PC-3 (cell line): ENCODE measurements at regions of chr12 and their contacts with region 1.

Region 1: DNA sequence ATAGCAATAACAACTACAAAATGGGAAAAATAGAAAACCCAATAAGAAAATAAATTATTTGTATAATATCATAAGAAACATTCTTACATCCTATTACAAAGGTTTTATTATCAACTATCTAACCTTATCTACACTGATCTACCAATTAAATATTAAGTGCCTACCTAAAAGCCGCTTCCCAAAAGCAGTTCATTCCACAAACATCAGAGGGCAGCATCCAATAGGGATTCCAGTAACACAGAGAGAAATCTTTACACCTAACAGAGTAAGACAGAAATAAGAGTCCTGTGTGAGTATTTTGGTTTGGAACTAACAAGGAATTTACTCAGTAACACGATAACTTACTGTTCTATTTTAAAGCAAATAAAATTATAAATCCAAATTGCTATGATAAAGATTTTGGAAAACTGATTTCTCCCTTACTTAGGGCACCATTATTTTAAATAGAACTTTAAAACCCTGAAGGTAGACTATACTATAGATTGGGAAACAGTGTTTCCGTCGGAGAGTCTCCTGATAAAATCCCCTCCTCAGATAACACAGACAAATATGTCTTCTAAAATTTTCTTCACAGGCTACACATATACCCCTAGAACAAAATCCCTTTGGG is 15.0 kb downstream of the GXYLT1 start:
- DNase-seq: peak; percentile 80
- ATAC-seq: peak; percentile 62
- H3K4me3 ChIP-seq: no peak overlapping the region
- H3K27ac ChIP-seq: no peak overlapping the region
- H3K4me1 ChIP-seq: peaks cover 20% of the 10 kb centered on the region
- H3K27me3 ChIP-seq: no peaks in the 10 kb centered on the region
- CTCF ChIP-seq: peak; percentile 94

Region 2: GRCh38 chr12:42145197-42145549 is 15.5 kb after region 1 on chr12:
- CTCF ChIA-PET with region 1: no interaction called
- POLR2A ChIA-PET with region 1: no interaction called
- intact Hi-C with region 1: no loop called
- DNase-seq: peak; percentile 2
- ATAC-seq: peak; percentile 1
- H3K4me3 ChIP-seq: peak overlapping the region; percentile 86
- H3K27ac ChIP-seq: no peak overlapping the region
- H3K4me1 ChIP-seq: peaks cover 23% of the 10 kb centered on the region; the same call in 1 of the 2 replicates
- H3K27me3 ChIP-seq: no peaks in the 10 kb centered on the region
- CTCF ChIP-seq: no peak

Region 3: DNA sequence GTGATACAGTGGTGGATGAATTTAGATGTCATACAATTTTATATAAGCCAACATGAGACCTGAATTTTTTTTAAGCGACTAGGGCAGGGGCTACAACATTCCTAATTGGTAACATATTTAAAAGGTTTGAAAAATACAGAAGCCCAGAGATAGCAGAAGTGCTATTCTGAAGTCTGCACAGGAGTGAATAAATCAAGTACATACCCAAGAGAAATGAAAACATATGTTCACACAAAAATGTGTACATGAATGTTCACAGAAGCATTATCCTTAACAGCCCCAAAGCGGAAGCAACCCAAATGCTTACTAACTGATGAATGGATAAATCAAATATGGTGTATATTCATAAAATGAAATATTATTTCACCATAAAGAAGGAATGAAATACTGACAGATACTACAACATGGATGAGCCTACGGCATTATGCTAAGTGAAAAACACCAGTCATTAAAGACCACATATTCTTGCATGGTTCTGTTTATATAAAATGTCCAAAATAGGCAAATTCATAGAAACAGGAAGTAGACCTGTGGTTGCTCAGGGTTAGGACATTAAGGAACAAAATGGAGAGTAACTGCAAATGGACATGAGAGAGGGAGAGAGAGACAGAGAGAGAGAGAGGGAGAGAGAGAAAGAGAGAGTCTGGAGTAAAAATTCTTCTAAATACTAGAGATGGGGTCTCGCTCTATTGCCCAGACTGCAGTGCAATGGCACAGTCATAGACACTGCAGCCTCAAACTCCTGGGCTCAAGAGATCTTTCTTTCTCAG is 42.9 kb after region 1 on chr12:
- CTCF ChIA-PET with region 1: no interaction called
- POLR2A ChIA-PET with region 1: no interaction called
- intact Hi-C with region 1: no loop called
- DNase-seq: no peak
- ATAC-seq: no peak
- H3K4me3 ChIP-seq: no peak overlapping the region
- H3K27ac ChIP-seq: no peak overlapping the region
- H3K4me1 ChIP-seq: no peaks in the 10 kb centered on the region
- H3K27me3 ChIP-seq: no peaks in the 10 kb centered on the region
- CTCF ChIP-seq: no peak

Region 4: GRCh38 chr12:42332301-42333285 is 202.9 kb after region 1 on chr12:
- CTCF ChIA-PET with region 1: no interaction called
- POLR2A ChIA-PET with region 1: no interaction called
- intact Hi-C with region 1: loop called (anchors 1 kb)
- DNase-seq: peak; percentile 67
- ATAC-seq: peak; percentile 67
- H3K4me3 ChIP-seq: no peak overlapping the region
- H3K27ac ChIP-seq: no peak overlapping the region
- H3K4me1 ChIP-seq: peaks cover 2% of the 10 kb centered on the region
- H3K27me3 ChIP-seq: no peaks in the 10 kb centered on the region
- CTCF ChIP-seq: peak; percentile 73

Region 5: GRCh38 chr12:42372154-42372791 is 242.6 kb after region 1 on chr12:
- CTCF ChIA-PET with region 1: interaction called, 4 read pairs
- POLR2A ChIA-PET with region 1: no interaction called
- intact Hi-C with region 1: loop called (anchors 1 kb)
- DNase-seq: peak; percentile 82
- ATAC-seq: peak; percentile 82
- H3K4me3 ChIP-seq: no peak overlapping the region
- H3K27ac ChIP-seq: no peak overlapping the region
- H3K4me1 ChIP-seq: no peaks in the 10 kb centered on the region
- H3K27me3 ChIP-seq: no peaks in the 10 kb centered on the region
- CTCF ChIP-seq: peak; percentile 90

Region 6: DNA sequence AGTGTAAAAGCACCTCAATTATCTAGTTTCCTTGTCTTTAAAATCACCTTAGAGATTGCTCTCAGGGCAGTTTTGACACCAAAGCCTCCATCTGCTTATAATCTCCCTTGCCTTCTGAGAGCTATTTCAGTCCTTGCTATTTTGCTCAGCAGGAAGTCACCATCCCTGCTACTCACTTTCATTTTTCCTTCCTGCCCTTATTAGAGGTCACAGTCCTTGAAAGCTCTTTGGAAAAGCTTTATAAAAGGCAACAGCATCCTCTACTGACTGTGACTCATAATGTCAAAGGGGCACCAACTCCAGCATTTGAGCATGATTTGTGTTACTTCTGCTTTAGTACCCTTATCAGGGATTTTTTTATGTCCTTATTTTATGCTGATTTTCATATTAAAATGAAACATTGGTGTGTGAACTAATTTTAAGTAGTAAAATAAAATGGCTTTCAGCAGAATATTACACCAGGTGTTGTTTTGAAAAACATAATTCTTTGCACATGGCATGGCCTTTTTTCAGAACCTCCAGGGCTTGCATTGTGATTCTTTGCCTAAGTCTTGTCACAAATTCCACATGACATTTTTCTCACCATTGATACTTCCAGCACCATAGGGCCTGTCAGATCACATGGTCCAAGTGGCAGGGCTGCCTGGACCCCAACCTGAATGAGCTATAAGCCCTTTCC is 1209.3 kb after region 1 on chr12:
- CTCF ChIA-PET with region 1: no interaction called
- POLR2A ChIA-PET with region 1: no interaction called
- intact Hi-C with region 1: loop called (anchors 1 kb)
- DNase-seq: peak; percentile 70
- ATAC-seq: peak; percentile 82
- H3K4me3 ChIP-seq: no peak overlapping the region; the same call in 1 of the 2 replicates
- H3K27ac ChIP-seq: peak overlapping the region; percentile 15; the same call in 1 of the 2 replicates
- H3K4me1 ChIP-seq: peaks cover 25% of the 10 kb centered on the region
- H3K27me3 ChIP-seq: no peaks in the 10 kb centered on the region
- CTCF ChIP-seq: peak; percentile 73